Activated T-helper 1 cell treated with anti-CD3 and anti-CD28 coated beads, Interleukin-12 subunit alpha, Interleukin-12 subunit beta, Interleukin-2, Interleukin-4 antibody, amounts not matched to agents 30 ng/mL and 10 ng/mL and 1 ng/mL, durations not matched to agents 14 hours and 24 hours and 36 hours (primary cell): ENCODE measurements at regions of chr7 and their contacts with region 1.

Region 1: DNA sequence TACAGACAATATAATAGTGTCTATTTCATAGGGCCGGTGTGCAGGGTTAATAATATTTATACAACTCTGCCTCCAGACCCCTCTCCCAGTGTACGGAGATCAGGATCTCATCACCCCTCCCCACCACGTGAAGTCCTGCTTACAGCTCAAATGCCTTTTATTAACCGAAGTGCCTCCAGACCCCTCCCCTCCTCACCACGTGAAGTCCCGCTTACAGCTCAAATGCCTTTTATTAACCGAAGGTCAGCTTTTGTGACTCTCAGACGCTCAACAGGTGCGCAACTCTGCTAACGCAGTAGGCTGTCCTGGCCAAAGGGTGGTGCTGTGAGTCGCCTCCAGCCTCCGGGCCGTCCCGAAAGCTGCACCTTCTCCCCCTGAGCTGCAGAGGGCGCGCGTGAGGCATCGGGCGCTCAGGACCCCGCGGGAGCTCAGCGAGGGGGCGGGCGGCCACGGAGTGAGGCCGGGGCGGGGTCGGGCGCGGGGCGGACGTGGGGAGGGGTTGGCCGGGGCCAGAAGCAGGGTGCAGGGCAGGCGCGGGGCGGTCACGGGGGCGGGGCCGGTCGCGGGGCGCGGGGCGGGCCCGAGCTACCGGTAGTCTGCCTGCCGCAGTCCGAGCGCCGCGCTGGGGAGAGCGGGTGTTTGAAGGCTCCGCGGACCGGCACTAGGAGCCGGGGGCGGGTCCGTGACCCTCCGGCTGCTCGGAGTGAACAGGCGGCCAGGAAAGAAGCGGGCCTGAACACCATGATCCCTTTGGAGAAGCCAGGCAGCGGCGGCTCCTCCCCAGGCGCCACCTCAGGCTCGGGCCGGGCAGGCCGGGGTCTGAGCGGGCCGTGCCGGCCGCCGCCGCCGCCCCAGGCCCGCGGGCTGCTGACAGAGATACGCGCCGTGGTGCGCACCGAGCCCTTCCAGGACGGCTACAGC is at the start of gene STK17A:
- DNase-seq: peak; percentile 93
- H3K4me3 Mint-ChIP-seq: peak within 1 kb of the TSS; percentile 96
- H3K27ac Mint-ChIP-seq: peak within 1 kb of the TSS; percentile 96
- H3K4me1 Mint-ChIP-seq: peaks cover 36% of the 10 kb centered on the region
- H3K27me3 Mint-ChIP-seq: peaks cover 21% of the 10 kb centered on the region
- total RNA-seq, gene STK17A: 44.8 and 47.8 TPM in 2 replicates

Region 2: GRCh38 chr7:43612599-43613589 is 30.1 kb after region 1 on chr7:
- intact Hi-C with region 1: loop called (anchors 1 kb)
- DNase-seq: no peak
- H3K4me3 Mint-ChIP-seq: peak overlapping the region; percentile 8
- H3K27ac Mint-ChIP-seq: peak overlapping the region; percentile 77
- H3K4me1 Mint-ChIP-seq: peaks cover 58% of the 10 kb centered on the region
- H3K27me3 Mint-ChIP-seq: no peaks in the 10 kb centered on the region

Region 3: GRCh38 chr7:43621729-43622448 is 39.1 kb after region 1 on chr7:
- intact Hi-C with region 1: loop called (anchors 1 kb)
- DNase-seq: no peak
- H3K4me3 Mint-ChIP-seq: peak overlapping the region; percentile 6
- H3K27ac Mint-ChIP-seq: peak overlapping the region; percentile 69
- H3K4me1 Mint-ChIP-seq: peaks cover 55% of the 10 kb centered on the region
- H3K27me3 Mint-ChIP-seq: no peaks in the 10 kb centered on the region

Region 4: GRCh38 chr7:43689115-43689514 is 106.4 kb after region 1 on chr7:
- intact Hi-C with region 1: no loop called
- DNase-seq: no peak
- H3K4me3 Mint-ChIP-seq: no peak overlapping the region
- H3K27ac Mint-ChIP-seq: no peak overlapping the region
- H3K4me1 Mint-ChIP-seq: peaks cover 47% of the 10 kb centered on the region
- H3K27me3 Mint-ChIP-seq: no peaks in the 10 kb centered on the region

Region 5: DNA sequence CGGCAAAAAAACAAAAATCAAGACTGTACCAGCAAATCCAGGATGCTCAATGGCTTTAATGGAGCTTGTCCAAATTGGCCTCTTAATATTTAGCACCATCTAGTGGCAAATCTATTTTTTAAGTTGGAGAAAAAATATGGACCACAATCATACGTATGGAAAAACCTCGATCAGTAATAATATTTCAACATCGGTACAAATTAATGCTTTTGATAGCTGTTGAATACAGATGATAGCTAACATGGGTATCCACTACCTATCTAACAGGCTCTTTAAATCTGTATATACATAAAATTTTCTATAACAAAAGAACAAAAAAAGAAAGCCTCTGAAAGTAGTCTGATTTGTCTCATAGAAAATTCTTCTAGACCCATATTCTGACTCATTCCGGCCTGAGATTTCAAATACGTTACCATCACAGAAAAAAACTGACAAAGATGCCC is 117.3 kb after region 1 on chr7:
- intact Hi-C with region 1: loop called (anchors 1 kb)
- DNase-seq: no peak
- H3K4me3 Mint-ChIP-seq: no peak overlapping the region
- H3K27ac Mint-ChIP-seq: no peak overlapping the region
- H3K4me1 Mint-ChIP-seq: peaks cover 65% of the 10 kb centered on the region
- H3K27me3 Mint-ChIP-seq: no peaks in the 10 kb centered on the region

Region 6: DNA sequence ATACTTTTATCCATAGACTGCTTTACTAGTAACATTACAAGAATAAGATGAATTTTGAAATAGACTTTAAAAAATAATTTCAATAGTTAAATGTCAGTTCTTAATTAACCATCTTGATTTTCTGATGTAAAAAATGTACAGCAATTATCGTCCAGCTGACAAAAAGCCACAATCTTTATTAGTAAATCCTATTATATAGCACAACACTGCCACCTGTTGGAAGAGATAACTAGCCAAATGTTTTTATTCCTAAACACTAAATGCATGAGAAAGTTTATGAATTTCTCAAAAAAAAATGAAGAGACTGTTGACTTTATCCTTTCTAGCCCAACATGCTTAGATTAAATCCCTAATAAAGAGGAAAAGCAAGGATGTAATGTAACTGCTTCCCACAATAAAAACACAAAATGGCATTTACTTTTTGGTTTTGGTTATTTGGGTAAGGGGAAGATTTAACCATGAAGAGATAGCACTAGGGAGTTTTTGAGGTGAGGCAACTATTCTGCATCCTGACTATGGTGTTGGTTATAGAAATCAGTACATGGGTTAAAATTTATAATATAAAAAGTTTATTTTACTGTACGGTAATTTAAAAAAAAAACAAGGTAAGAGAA is 138.5 kb after region 1 on chr7:
- intact Hi-C with region 1: loop called (anchors 1 kb)
- DNase-seq: no peak
- H3K4me3 Mint-ChIP-seq: no peak overlapping the region
- H3K27ac Mint-ChIP-seq: no peak overlapping the region
- H3K4me1 Mint-ChIP-seq: peaks cover 27% of the 10 kb centered on the region
- H3K27me3 Mint-ChIP-seq: no peaks in the 10 kb centered on the region

Region 7: DNA sequence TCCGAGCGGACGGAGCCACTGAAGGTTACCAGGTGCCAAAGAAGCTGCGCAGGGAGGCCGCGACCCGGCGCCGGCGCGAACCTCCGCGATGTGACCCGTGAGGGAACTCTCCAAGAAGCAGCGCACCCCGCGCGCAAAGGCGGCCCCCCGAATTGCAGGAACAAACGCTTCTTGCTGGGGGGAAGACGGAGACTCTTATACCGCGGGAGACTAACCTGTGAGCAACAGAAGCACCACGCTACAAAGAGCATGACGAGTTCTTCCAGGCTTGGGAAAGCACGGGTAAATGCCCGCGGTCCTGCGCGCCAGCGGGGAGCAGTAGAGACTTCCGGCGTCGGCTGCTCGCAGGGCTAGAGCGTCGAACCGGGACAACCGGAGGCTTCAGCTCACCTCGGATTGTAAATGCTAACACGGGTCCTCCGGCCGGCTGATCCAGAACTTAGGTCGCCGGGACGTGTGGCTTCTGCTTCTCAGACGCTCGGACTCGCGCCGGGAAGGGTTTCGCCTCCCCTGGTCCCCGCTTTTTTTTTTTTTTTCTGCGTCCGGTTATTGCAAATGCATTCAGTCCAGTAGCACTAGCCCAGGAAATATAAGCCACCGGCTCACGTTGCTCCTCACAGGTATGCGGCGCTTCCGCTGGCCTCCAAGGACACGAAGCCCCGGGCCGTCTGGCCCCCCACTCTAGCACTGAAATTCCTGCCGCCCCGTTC is 146.6 kb after region 1 on chr7 and contains the start of gene COA1:
- intact Hi-C with region 1: loop called (anchors 1 kb)
- DNase-seq: peak; percentile 76
- H3K4me3 Mint-ChIP-seq: peak within 1 kb of the TSS; percentile 88
- H3K27ac Mint-ChIP-seq: peak within 1 kb of the TSS; percentile 76
- H3K4me1 Mint-ChIP-seq: peaks cover 28% of the 10 kb centered on the region
- H3K27me3 Mint-ChIP-seq: peaks cover 3% of the 10 kb centered on the region
- total RNA-seq, gene COA1: 81.7 and 88.6 TPM in 2 replicates

Region 8: DNA sequence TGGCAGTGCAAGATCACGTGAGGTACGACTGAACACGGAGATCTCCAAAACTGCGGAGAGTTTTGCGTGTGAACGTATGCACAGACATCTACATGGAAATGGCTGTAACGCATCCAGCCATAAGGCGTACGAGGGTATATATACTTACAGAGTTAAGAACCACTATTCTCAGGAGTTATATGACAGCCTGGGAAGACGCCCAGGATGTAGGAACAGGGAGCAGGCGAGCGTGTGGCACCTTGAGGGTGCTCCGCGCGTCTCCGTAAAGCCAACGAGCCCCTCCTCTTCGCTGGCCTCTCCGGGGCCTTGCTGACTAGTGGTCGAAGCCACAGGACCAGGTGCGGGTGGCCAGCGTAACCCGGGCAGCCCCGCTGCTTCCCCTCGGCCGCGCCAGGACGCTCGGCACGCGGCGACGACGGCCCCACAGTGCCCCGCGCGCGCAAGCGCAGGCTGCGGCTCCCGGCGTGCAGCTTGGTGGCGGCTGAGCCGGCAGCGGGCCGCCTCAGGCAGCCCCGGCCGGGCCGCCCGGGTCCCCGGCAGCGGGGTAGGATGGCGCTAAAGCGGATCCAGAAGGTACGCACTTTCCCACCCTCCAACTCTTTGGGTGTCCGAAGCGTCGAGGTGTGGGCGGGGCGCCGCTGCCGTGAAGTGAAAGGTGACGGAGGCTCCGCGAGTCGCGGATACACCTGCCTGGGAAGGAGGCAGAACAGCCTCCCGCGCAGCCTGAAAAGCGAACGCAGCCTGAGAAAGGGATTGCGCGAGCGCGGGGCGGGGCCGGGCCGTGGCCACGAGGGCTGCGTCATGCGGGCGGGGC is 343.4 kb after region 1 on chr7 and contains the start of gene UBE2D4:
- intact Hi-C with region 1: loop called (anchors 2 kb)
- DNase-seq: peak; percentile 88
- H3K4me3 Mint-ChIP-seq: peak within 1 kb of the TSS; percentile 95
- H3K27ac Mint-ChIP-seq: peak within 1 kb of the TSS; percentile 97
- H3K4me1 Mint-ChIP-seq: peaks cover 30% of the 10 kb centered on the region
- H3K27me3 Mint-ChIP-seq: peaks cover 2% of the 10 kb centered on the region
- total RNA-seq, gene UBE2D4: 15.3 and 17.7 TPM in 2 replicates